IMR-90 (cell line): ENCODE measurements at regions of chr11 and their contacts with region 1.

Region 1: DNA sequence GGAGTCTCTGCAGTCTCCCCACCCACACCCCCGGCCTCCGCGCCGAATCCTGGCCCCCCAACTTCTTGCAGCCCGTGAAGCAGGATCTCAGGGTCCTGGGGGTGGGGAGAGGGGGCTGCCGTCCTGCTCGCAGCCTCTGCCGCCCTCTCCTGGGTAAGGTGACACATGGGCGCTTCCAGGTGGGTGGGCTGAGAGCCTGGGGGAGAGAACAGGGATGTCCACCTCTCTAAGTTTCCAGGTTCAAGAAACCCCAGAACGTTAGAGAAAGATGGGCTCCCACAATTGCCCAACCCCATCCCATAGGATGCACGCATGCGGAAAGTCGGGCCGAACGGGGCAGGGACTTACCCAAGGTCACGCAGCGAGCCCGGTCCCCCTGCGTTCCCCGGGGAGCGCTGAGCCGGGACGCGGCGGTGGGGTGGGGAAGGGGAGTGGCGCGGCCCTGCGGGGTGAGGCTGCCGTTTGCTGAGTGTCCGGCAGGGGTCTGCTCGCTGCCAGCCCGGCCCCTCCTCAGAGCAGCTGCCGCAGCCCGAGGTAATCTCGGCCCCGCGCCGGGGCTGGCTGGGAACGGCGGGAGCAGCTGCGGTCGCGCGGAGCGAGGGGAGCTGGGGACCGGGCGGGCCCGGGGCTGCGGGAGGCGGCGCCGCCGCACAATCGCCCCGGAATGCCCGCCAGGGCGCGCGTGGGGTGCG is 705 bp upstream of the CAPN1 start:
- DNase-seq: peak; percentile 60
- ATAC-seq: peak; percentile 78
- H3K4me3 ChIP-seq: peak overlapping the region; percentile 94
- H3K27ac ChIP-seq: peak overlapping the region; percentile 78
- H3K4me1 ChIP-seq: peaks cover 11% of the 10 kb centered on the region
- H3K27me3 ChIP-seq: no peaks in the 10 kb centered on the region
- CTCF ChIP-seq: peak; percentile 52
- POLR2A ChIP-seq: no peak
- RAD21 ChIP-seq: peak; percentile 53

Region 2: DNA sequence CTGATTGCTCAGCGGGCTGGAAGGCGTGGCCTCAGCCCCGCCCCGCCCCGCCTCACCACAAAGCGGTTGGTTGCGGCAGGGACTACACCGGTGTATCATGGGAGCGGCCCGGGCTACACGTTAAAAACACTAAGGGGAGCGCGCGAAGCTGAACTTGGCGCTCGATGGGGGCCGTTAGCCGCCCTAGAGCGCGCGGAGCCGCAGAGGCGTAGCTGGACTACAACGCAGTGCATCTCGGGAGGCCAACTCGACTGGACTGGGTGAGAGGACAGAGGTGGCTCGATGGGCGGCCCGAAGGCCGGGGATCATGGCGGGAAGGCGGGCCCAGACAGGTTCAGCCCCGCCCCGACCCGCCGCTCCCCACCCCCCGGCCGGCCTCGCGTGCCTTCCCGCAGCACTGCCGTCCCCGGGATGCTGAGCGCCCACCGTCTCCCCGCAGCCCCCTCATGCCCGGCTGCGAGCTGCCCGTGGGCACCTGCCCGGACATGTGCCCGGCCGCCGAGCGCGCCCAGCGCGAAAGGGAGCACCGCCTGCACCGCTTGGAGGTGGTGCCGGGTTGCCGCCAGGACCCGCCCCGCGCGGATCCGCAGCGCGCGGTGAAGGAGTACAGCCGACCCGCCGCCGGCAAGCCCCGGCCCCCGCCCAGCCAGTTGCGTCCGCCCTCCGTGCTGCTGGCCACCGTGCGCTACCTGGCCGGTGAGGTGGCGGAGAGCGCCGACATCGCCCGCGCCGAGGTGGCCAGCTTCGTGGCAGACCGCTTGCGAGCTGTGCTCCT is 140.0 kb before region 1 on chr11 and contains the start of gene SAC3D1:
- CTCF ChIA-PET with region 1: no interaction called
- POLR2A ChIA-PET with region 1: no interaction called
- dilution Hi-C with region 1: no loop called
- in situ Hi-C with region 1: no loop called
- intact Hi-C with region 1: no loop called
- DNase-seq: peak; percentile 93
- ATAC-seq: peak; percentile 96
- H3K4me3 ChIP-seq: peak within 1 kb of the TSS; percentile 94
- H3K27ac ChIP-seq: peak within 1 kb of the TSS; percentile 89
- H3K4me1 ChIP-seq: no peaks in the 10 kb centered on the region
- H3K27me3 ChIP-seq: no peaks in the 10 kb centered on the region
- CTCF ChIP-seq: no peak
- POLR2A ChIP-seq: no peak
- RAD21 ChIP-seq: no peak
- total RNA-seq, gene SAC3D1: 2.8 and 2.9 TPM in 2 replicates

Region 3: DNA sequence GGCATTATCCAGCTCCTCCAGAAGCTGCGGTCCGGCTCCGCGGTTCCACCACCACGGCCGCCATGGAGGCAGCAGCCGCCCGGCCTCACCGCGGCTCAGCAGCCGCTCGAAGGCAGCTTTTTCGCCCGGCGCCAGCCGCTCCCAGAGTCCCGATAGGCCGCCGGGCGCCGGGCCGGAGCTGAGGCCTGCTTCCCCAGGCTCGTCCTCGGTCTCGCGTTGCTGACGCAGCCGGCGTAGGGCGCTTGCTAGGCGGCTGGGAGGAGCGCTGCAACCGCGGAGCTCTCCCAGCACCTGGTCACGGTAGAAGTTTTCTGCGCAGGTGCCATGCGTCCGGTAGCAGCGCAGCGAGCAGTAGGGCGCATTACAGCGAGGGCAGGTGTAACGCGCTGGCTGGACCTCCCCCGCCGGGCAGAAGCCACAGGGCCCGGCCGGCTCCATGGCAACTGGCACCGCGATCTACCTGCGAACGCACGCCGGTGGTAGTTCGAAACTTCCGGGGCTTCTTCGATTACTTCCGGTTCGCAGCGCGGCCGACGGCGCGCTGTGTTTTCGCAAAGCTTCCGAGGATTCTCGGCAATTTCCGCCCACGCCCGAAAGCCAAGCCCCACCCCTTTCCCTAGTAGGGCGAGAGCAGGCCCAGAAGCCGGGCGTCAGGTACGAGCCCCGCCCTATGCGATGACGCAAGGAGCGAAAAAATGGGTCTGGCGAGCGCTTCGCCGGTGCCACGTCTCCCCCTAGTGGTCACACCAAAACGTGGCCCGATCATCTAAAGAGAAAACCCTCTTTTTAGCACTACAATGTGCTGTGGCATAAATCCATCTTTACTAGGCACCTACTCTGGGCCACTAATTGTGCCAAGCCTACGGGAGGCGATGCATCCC is 63.6 kb before region 1 on chr11 and contains the start of gene ZNHIT2:
- CTCF ChIA-PET with region 1: interaction called, 5 read pairs
- POLR2A ChIA-PET with region 1: interaction called, 5 read pairs
- dilution Hi-C with region 1: no loop called
- in situ Hi-C with region 1: no loop called
- intact Hi-C with region 1: loop called (anchors 5 kb)
- DNase-seq: peak; percentile 98
- ATAC-seq: peak; percentile 78
- H3K4me3 ChIP-seq: peak within 1 kb of the TSS; percentile 69
- H3K27ac ChIP-seq: peak within 1 kb of the TSS; percentile 47
- H3K4me1 ChIP-seq: peaks cover 14% of the 10 kb centered on the region
- H3K27me3 ChIP-seq: no peaks in the 10 kb centered on the region
- CTCF ChIP-seq: peak; percentile 98
- POLR2A ChIP-seq: peak; percentile 78
- RAD21 ChIP-seq: peak; percentile 90
- total RNA-seq, gene ZNHIT2: 3.6 and 3.9 TPM in 2 replicates